ENCODE measurements at regions of chr17 and their contacts with region 1.

Region 1: GRCh38 chr17:45385331-45385997 is 47.2 kb downstream of the ARHGAP27 start:
- DNase-seq: peak; percentile 73
- H3K4me3 ChIP-seq: no peak overlapping the region
- H3K27ac ChIP-seq: no peak overlapping the region
- H3K4me1 ChIP-seq: no peaks in the 10 kb centered on the region
- H3K27me3 ChIP-seq: no peaks in the 10 kb centered on the region
- CTCF ChIP-seq: peak; percentile 78

Region 2: DNA sequence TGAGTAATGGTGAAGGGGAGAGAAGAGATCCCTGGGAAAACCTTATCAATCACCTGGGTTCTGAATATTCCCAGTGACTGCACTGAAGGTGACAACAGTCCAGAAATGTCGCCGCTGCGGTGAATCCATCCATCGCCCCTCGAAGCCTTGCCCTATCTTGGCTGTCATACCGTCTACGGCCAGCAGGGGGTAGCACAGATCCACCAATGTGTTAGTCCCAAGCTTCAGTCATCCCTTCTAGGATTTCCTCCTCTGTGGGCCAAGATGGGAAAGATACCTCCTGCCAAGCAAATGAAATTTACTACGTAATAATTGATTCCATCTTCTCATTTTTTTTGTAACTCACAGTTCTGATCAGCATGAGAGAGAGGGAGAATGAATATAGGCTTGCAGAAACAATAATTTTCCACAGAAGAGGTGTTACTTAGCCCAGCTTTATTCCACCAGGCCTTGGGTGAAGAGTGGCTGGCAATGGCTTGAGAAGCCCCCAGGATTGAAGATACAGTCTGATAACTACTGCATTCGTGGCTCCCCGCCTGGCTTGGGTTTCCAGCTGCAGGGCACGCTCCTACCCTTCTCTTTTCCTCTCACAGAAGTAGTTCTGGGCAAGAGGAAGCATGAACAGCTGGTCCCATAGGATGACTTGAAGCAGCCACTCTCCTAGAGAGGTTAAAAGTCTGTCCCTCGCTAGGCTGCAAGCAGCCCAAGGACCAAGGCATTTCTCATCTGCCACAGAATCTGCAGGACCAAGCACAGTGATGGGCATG is 166.4 kb before region 1 on chr17:
- CTCF ChIA-PET with region 1: interaction called, 3 read pairs
- POLR2A ChIA-PET with region 1: no interaction called
- intact Hi-C with region 1: loop called (anchors 1 kb)
- DNase-seq: peak; percentile 79
- H3K4me3 ChIP-seq: no peak overlapping the region
- H3K27ac ChIP-seq: no peak overlapping the region
- H3K4me1 ChIP-seq: peaks cover 4% of the 10 kb centered on the region
- H3K27me3 ChIP-seq: peaks cover 4% of the 10 kb centered on the region
- CTCF ChIP-seq: peak; percentile 74

Region 3: DNA sequence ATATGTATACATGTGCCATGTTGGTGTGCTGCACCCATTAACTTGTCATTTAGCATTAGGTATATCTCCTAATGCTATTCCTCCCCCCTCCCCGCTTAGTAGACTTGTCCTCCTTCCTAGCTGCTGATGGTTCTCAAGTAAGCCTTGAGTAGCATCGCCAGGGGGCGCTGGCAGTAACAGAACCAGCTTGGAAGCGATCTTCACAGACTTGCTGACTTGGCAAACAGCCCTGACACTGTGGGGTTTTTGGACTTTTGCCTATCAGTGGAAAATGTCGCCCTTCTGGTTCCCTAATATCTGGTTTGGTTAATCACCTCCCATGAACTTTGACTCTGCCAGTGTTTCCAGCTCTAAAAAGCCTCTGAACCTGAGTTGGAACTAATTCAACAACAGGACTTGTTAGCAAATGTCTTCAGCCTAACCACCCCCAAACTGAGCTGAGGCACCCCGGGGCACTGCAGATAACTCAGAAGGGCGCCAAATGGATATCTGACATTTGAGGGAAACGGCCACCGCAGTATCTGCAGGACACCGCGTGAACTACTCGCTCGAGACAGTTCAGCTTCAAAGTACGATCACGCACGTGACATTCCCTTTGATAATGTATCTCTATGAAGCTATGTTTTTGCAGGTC is 108.1 kb before region 1 on chr17:
- CTCF ChIA-PET with region 1: interaction called, 14 read pairs
- POLR2A ChIA-PET with region 1: no interaction called
- intact Hi-C with region 1: loop called (anchors 5 kb)
- DNase-seq: peak; percentile 84
- H3K4me3 ChIP-seq: no peak overlapping the region
- H3K27ac ChIP-seq: no peak overlapping the region
- H3K4me1 ChIP-seq: peaks cover 4% of the 10 kb centered on the region
- H3K27me3 ChIP-seq: no peaks in the 10 kb centered on the region
- CTCF ChIP-seq: peak; percentile 65

Region 4: GRCh38 chr17:45307290-45308015 is 78.0 kb before region 1 on chr17:
- CTCF ChIA-PET with region 1: no interaction called
- POLR2A ChIA-PET with region 1: no interaction called
- intact Hi-C with region 1: no loop called
- DNase-seq: no peak
- H3K4me3 ChIP-seq: no peak overlapping the region
- H3K27ac ChIP-seq: no peak overlapping the region
- H3K4me1 ChIP-seq: no peaks in the 10 kb centered on the region
- H3K27me3 ChIP-seq: no peaks in the 10 kb centered on the region
- CTCF ChIP-seq: no peak